Mammary epithelial cell (primary cell): ENCODE measurements at regions of chr22 and their contacts with region 1.

Region 1: GRCh38 chr22:37608477-37609239 is at the start of gene GGA1:
- DNase-seq: peak; percentile 97
- H3K4me3 ChIP-seq: peak within 1 kb of the TSS; percentile 84 to 98 (median 98)
- H3K27ac ChIP-seq: peak within 1 kb of the TSS; percentile 99
- H3K4me1 ChIP-seq: peaks cover 19% of the 10 kb centered on the region
- H3K27me3 ChIP-seq: no peaks in the 10 kb centered on the region
- CTCF ChIP-seq: no peak
- total RNA-seq, gene GGA1: 33.8 to 60.2 TPM

Region 2: DNA sequence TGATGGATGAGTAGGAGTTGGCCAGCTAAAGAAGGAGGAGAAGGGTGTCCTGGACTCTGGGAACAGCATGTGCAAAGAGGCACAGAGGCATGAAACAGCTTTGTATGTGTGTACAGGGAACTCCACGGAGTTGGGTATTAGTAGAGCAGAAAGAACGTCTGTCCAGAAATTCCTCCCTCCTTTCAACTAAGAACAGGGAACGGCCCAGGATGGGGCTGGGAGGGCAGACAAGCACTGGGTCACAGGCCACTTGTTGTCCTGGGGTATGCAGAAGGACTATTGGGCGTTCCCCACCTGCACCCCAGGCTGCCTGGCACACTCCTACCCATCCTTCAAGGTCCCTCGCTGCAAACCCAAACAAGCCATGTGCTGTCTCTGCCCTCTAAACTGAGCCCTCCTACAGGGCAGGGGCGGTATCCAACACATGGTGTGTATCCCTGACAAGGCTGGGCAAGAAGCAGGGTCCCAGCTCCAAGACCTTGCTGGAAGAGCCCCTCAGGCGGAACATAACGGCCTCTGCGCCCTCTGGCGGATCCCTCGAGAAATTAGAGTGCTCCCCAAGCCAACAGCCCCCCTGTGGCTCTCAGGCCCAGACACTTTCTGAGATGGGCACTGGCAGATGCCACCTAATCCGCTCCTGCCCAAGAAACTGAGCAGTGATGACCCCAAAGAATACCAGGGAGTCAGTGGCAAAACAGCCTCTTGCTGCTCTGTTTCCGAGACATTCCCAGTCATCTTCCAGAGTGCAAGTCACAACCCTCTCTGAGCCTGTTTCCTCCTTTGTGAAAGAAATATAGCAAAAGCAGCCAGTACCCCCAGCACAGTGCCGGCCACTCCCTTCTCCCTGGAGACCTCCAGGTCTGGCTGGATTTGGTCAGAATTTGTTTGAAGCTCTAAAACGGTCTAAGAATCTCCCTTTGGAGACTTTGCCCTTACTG is 179.7 kb before region 1 on chr22:
- CTCF ChIA-PET with region 1: no interaction called
- dilution Hi-C with region 1: no loop called
- in situ Hi-C with region 1: no loop called
- intact Hi-C with region 1: no loop called
- DNase-seq: no peak
- H3K4me3 ChIP-seq: no peak overlapping the region
- H3K27ac ChIP-seq: no peak overlapping the region
- H3K4me1 ChIP-seq: peaks cover 36% of the 10 kb centered on the region
- H3K27me3 ChIP-seq: no peaks in the 10 kb centered on the region
- CTCF ChIP-seq: peak; percentile 49 to 65

Region 3: DNA sequence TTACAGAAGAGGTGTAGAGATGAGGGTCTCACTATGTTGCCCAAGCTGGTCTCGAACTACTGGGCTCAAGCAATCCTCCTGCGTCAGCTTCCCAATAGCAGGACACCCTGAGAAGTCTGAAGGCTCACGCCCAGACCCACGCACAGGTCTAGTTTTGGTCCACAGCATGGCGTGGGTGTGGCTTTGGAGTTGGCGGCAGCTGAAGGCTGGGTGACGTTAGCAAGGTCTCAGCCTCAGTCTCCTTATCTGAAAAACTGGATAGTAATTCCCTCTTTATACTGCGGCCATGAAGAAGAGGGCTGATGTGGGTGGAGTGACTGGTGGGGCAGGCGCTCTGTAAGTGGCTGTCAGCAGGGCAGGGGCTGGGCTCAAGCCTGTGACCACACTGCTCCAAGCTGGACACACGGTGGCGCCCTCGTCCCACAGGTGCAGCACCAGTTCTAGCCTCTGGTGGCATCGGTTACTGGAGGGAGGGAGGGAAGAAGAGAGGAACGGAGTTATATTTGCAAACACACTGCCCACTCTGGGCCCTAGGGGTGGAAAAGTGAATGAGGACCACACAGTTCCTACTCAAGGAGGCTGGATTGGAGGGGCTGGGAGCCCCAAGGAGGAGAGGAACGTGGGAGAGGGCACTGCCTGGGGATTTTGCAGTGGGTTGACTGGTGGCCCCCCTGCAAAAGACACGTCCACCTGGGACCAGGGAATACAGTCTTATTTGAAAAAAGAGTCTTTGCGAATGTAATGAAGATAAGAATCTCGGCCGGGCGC is 69.9 kb before region 1 on chr22:
- CTCF ChIA-PET with region 1: no interaction called
- dilution Hi-C with region 1: no loop called
- in situ Hi-C with region 1: no loop called
- intact Hi-C with region 1: loop called (anchors 5 kb)
- DNase-seq: peak; percentile 90
- H3K4me3 ChIP-seq: peak overlapping the region in 1 of 3 experiments; percentile 5
- H3K27ac ChIP-seq: peak overlapping the region; percentile 26
- H3K4me1 ChIP-seq: peaks cover 37% of the 10 kb centered on the region
- H3K27me3 ChIP-seq: no peaks in the 10 kb centered on the region
- CTCF ChIP-seq: peak; percentile 95 to 96

Region 4: DNA sequence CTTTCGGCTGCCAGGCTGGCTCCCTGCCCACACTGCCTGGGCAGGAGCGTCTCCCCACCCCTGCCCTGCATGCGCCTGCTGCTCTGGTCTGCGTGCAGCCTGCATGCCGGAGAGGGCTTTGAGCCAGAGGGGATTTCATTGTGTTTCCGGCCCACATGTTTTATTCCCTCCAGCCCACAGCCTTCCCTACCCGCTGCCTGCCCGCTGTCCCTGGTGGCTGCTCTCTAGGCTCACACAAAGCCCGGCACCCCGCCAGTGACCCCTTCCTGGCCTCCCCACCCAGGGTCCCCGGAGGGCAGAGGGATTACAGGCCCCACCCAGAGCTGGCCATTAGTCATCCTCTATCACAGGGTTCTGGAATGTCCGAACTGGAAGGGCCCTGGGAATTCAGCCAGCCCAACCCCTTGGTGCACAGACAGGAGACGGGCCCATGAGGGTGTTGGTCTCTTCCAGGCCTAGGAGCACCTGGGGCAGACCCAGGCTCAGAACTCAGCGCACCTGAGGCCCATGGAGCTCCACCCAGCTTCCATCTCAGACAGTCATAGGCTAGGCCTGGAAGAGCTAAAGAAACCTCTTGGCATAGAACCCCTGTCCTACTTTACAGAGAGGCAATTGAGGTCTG is 143.9 kb after region 1 on chr22:
- CTCF ChIA-PET with region 1: interaction called, 3 read pairs
- dilution Hi-C with region 1: no loop called
- in situ Hi-C with region 1: no loop called
- intact Hi-C with region 1: loop called (anchors 2 kb)
- DNase-seq: peak; percentile 99
- H3K4me3 ChIP-seq: no peak overlapping the region
- H3K27ac ChIP-seq: peak overlapping the region; percentile 57
- H3K4me1 ChIP-seq: peaks cover 79% of the 10 kb centered on the region
- H3K27me3 ChIP-seq: no peaks in the 10 kb centered on the region
- CTCF ChIP-seq: peak in 1 of 2 donors; percentile 19

Region 5: DNA sequence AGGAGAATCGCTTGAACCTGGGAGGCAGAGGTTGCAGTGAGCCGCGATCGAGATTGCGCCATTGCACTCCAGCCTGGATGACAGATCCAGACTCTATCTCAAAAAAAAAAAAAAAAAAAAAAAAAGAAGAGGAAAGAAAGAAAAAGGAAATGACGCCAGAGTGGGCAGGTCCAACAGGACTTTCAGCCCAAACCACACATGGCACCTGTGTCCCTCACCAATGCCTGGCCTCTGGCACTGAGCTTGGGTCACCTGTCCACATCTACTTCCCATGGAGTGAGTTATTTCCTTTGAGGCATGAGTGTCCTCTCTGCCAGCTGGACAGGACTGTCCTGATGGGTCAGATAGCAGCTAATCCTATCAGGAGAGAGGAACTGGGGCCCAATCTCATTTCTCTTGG is 183.8 kb after region 1 on chr22:
- CTCF ChIA-PET with region 1: no interaction called
- dilution Hi-C with region 1: no loop called
- in situ Hi-C with region 1: no loop called
- intact Hi-C with region 1: loop called (anchors 1 kb)
- DNase-seq: no peak
- H3K4me3 ChIP-seq: no peak overlapping the region
- H3K27ac ChIP-seq: no peak overlapping the region
- H3K4me1 ChIP-seq: no peaks in the 10 kb centered on the region
- H3K27me3 ChIP-seq: no peaks in the 10 kb centered on the region
- CTCF ChIP-seq: no peak

Region 6: GRCh38 chr22:37910890-37911743 is 302.5 kb after region 1 on chr22:
- CTCF ChIA-PET with region 1: no interaction called
- dilution Hi-C with region 1: no loop called
- in situ Hi-C with region 1: no loop called
- intact Hi-C with region 1: loop called (anchors 5 kb)
- DNase-seq: no peak
- H3K4me3 ChIP-seq: peak overlapping the region in 1 of 3 experiments; percentile 33
- H3K27ac ChIP-seq: no peak overlapping the region
- H3K4me1 ChIP-seq: peaks cover 46% of the 10 kb centered on the region
- H3K27me3 ChIP-seq: no peaks in the 10 kb centered on the region
- CTCF ChIP-seq: no peak

Region 7: DNA sequence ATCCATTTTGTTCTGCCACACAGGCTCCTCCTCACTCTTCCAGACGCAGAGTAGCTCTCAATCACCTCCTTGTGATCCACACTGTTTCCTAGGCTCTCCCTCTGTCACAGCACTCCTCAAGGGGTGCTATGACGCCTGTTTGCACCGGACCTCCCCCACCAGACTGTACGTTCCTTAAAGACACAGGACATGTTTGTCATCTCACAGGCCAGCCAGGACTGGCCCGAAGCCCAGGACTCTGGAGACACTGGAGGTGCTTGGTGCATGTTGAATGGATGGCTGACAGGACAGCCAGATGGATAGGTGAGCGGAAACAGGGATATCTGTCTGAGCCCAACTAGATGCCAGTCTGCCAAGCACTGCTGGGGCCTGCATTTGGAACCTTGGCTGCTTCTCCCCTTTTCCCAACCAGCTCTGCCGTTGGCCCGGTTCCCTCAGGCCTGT is 559.4 kb after region 1 on chr22:
- CTCF ChIA-PET with region 1: no interaction called
- dilution Hi-C with region 1: no loop called
- in situ Hi-C with region 1: no loop called
- intact Hi-C with region 1: loop called (anchors 5 kb)
- DNase-seq: peak; percentile 58
- H3K4me3 ChIP-seq: no peak overlapping the region
- H3K27ac ChIP-seq: no peak overlapping the region
- H3K4me1 ChIP-seq: peaks cover 22% of the 10 kb centered on the region
- H3K27me3 ChIP-seq: no peaks in the 10 kb centered on the region
- CTCF ChIP-seq: no peak